ENCODE measurements at regions of chrX and their contacts with region 1.

Region 1: DNA sequence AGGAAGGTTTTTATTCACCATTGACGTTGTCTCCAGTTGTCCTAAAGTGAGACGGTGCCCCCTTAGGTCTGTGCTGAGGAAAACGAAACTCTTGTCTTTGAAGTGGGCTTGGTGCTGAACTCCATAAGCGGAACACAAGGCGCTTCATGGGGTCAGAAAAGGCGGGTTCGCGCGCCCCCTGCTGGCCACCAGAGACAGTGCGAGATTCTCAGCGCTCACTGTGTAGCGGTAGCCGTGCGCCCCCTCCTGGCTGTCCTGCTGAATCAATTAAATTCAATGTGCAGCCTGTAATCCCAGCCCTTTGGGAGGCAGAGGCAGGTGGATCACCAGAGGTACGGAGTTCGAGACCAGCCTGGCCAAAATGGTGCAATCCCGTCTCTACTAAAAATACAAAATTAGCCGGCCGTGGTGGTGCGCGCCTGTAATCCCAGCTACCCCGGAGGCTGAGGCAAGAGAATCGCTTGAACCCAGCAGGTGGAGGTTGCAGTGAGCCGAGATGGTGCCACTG is 64.1 kb downstream of the RLIM start:
- DNase-seq: peak; percentile 85
- H3K4me3 Mint-ChIP-seq: no peak overlapping the region
- H3K27ac Mint-ChIP-seq: no peak overlapping the region
- H3K4me1 Mint-ChIP-seq: peaks cover 2% of the 10 kb centered on the region
- H3K27me3 Mint-ChIP-seq: no peaks in the 10 kb centered on the region

Region 2: GRCh38 chrX:73855546-73855945 is 694.8 kb before region 1 on chrX:
- CTCF ChIA-PET with region 1: interaction called, 3 read pairs
- intact Hi-C with region 1: loop called (anchors 1 kb)
- DNase-seq: peak; percentile 69
- H3K4me3 Mint-ChIP-seq: no peak overlapping the region
- H3K27ac Mint-ChIP-seq: no peak overlapping the region
- H3K4me1 Mint-ChIP-seq: no peaks in the 10 kb centered on the region
- H3K27me3 Mint-ChIP-seq: no peaks in the 10 kb centered on the region

Region 3: DNA sequence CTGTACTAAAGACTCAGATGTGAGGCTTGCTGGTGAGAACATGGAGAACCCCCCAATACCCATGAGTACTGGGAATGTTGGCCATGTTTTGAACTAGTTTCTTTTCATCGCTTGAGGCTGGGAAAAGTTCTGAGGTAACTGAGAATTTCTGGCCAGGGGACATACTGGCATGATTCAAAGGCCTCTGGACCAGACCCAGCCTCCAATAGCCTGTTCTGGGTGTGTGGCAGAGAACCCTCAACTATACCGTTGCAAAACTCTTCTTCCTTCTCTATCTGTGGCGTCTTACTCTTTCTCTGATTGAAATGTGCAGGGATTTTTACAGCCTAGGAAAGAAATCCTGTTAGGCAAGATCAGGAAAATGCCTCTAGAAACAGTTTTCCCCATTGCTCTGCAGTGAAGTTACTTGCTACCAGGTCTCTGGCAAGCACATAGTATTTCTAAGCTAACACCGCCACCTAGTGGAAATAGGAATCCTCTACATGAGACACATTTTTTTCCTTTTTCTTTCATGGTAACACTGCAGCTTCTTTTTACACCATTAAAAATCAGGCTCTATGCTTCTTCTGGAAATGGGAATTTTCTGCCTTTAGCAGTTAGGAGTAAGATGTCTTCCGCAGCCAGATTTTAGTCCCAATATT is 417.1 kb before region 1 on chrX:
- CTCF ChIA-PET with region 1: no interaction called
- intact Hi-C with region 1: loop called (anchors 10 kb)
- DNase-seq: peak; percentile 5
- H3K4me3 Mint-ChIP-seq: no peak overlapping the region
- H3K27ac Mint-ChIP-seq: no peak overlapping the region
- H3K4me1 Mint-ChIP-seq: no peaks in the 10 kb centered on the region
- H3K27me3 Mint-ChIP-seq: no peaks in the 10 kb centered on the region

Region 4: DNA sequence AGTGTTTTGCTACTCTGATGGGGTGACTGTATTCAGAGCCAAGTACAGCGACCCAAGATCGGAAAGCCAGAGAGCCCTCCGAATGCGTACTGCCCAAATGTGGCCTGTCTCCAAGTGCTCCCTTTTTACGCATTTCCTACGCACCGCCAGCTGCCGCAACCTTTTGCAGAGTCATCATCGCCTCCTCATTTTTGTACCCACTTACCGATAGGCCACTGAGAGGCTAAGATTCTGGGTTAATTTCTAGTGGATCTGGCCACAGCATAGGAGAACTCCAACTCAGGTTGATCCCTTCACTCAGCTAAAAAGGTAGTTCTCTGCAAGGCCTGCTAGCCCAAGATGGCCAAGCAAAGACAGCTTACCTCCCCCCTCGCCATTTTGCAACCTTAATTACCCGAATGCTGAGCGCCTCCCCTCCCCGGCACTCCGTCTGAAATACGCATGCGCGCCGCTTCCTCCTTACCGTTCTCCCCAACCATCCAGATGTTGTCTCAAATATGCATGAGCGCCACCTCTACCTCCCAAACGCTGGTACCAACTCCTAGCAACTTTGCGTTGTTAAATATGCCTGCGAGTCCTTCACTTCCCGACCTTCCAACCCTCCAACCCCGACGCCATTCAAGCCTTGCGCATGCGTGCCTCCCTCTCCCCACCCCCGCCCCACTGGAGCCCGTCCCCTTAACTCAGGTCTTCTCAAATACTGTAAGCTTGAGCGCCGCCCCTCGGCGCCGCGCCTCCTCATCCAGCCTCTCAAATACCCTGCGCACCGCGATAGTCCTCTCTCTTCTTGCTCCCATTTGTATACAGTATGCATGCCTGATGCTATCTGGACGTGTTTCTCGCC is 258.2 kb before region 1 on chrX:
- CTCF ChIA-PET with region 1: no interaction called
- intact Hi-C with region 1: no loop called
- DNase-seq: peak; percentile 85
- H3K4me3 Mint-ChIP-seq: peak overlapping the region; percentile 94
- H3K27ac Mint-ChIP-seq: peak overlapping the region; percentile 98
- H3K4me1 Mint-ChIP-seq: peaks cover 18% of the 10 kb centered on the region
- H3K27me3 Mint-ChIP-seq: no peaks in the 10 kb centered on the region

Region 5: GRCh38 chrX:74382613-74383012 is 167.7 kb before region 1 on chrX:
- CTCF ChIA-PET with region 1: interaction called, 3 read pairs
- intact Hi-C with region 1: loop called (anchors 1 kb)
- DNase-seq: peak; percentile 73
- H3K4me3 Mint-ChIP-seq: no peak overlapping the region
- H3K27ac Mint-ChIP-seq: no peak overlapping the region
- H3K4me1 Mint-ChIP-seq: no peaks in the 10 kb centered on the region
- H3K27me3 Mint-ChIP-seq: no peaks in the 10 kb centered on the region

Region 6: DNA sequence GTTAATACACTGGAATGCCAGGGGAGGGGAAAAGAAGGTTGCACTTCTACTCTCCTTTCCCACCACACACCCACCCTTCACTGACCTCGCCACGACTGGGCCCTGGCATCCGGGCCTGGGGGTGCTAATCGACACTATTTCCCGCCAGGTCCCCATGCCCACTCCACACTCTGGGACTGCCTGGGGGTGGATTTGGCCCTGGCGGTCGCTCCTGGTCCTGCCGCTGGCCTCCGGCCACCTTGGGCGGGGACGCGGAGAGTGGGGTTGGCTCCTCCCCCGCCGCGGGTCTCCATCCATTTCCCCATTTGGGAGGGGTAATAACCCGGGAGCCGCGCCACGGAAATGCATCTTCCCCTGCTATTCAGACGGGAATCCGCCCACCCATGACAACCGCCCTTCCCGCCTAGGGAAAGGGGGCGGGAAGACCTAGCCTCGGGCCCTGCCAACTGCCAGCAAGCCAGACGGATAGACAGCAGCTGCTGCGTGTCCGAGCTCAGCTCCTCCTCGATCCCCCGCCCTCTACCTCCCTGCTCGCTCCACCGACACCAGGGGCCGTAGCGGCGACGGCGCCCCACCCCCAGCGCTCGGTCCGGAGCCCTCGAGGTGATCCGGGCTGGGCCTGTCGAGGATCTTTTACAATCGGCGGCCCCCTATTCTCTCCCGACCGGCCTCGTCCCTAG is 14.1 kb before region 1 on chrX:
- CTCF ChIA-PET with region 1: interaction called, 11 read pairs
- intact Hi-C with region 1: loop called (anchors 1 kb)
- DNase-seq: peak; percentile 40
- H3K4me3 Mint-ChIP-seq: peak overlapping the region; percentile 73
- H3K27ac Mint-ChIP-seq: peak overlapping the region; percentile 2
- H3K4me1 Mint-ChIP-seq: peaks cover 20% of the 10 kb centered on the region
- H3K27me3 Mint-ChIP-seq: no peaks in the 10 kb centered on the region